ENCODE measurements at regions of chr1 and their contacts with region 1.

Region 1: DNA sequence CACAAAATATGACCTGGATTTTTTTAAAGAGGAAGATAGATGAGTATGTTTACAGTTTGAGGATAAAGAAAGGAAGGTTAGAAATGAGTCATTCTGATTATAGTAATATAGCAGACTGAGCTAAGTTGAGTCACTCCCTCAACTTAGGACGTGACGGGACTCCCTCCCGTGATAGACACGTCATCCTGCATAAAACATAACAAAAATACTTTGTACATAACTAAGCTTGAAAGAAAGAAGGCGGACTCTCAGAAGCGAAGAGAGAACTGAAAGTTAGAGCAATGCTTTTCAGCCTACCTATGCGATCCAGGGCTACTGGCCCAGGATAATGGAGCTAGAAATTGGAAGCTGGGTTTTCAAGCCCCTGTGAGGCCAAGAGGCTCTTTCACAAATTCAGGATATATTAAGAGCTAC is 53.0 kb upstream of the DESI2 start:
- DNase-seq: peak; percentile 76 to 87 (median 80)
- H3K4me3 ChIP-seq: no peak overlapping the region
- H3K4me3 Mint-ChIP-seq: no peak overlapping the region
- H3K27ac ChIP-seq: peak overlapping the region in 1 of 2 donors; percentile 52
- H3K27ac Mint-ChIP-seq: peak overlapping the region; percentile 58 to 94 (median 86)
- H3K4me1 ChIP-seq: peaks cover 8 to 13% of the 10 kb centered on the region in 2 donors
- H3K4me1 Mint-ChIP-seq: peaks cover 23% of the 10 kb centered on the region
- H3K27me3 ChIP-seq: no peaks in the 10 kb centered on the region
- H3K27me3 Mint-ChIP-seq: peaks cover 2 to 5% (median 3%) of the 10 kb centered on the region in 3 donors
- CTCF ChIP-seq: no peak

Region 2: DNA sequence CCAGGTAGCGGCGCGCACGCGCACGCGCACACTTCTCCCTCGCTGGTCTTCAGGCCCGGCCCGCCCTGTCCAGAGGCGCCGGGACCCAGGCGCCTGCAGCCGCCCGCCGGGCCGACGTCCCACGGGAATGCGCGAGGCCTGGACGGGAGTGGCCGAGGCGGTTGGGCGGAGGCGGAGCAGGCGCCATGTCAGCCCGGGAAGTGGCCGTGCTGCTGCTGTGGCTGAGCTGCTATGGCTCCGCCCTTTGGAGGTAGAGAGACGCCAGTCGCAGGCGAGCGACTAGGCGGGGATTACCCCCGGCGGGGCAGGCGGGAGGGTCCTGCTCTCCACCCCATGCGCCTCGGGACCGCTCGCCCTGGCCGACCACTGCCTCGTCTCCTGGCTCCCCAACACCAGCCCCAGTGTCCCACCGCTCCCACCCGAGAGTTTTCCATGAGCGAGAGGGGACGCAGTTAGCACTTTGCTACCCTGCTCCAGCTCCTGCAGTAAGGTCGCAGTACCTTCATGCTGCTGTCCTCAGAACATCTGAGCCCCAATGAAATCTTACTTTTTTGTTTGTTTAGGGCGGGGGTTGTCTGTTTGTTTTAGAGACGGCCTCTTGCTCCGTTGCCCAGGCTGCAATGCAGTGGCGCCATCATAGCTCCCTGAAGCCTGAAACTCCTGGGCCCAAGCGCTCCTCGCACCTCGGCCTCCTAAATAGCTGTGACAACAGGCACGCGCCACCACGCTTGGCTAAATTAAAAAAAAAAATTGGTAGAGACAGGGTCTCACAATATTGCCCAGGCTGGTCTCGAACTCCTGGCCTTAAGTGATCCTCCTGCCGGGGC is 138.5 kb before region 1 on chr1 and contains the start of gene CATSPERE:
- intact Hi-C with region 1: loop called in 1 of 2 experiments (anchors 10 kb)
- DNase-seq: peak; percentile 56 to 72 (median 68)
- H3K4me3 ChIP-seq: peak within 1 kb of the TSS; percentile 46 to 83 (median 64)
- H3K4me3 Mint-ChIP-seq: peak within 1 kb of the TSS; percentile 86 to 98
- H3K27ac ChIP-seq: peak within 1 kb of the TSS; percentile 21 to 75
- H3K27ac Mint-ChIP-seq: peak within 1 kb of the TSS; percentile 86 to 96 (median 92)
- H3K4me1 ChIP-seq: peaks cover 11 to 16% of the 10 kb centered on the region in 2 donors
- H3K4me1 Mint-ChIP-seq: peaks cover 9% of the 10 kb centered on the region
- H3K27me3 ChIP-seq: no peaks in the 10 kb centered on the region
- H3K27me3 Mint-ChIP-seq: peaks cover 0 to 2% (median 0%) of the 10 kb centered on the region in 3 donors
- CTCF ChIP-seq: no peak
- polyA plus RNA-seq, gene CATSPERE: 0.63 TPM in 1 of 3 donors, not detected in the others

Region 3: DNA sequence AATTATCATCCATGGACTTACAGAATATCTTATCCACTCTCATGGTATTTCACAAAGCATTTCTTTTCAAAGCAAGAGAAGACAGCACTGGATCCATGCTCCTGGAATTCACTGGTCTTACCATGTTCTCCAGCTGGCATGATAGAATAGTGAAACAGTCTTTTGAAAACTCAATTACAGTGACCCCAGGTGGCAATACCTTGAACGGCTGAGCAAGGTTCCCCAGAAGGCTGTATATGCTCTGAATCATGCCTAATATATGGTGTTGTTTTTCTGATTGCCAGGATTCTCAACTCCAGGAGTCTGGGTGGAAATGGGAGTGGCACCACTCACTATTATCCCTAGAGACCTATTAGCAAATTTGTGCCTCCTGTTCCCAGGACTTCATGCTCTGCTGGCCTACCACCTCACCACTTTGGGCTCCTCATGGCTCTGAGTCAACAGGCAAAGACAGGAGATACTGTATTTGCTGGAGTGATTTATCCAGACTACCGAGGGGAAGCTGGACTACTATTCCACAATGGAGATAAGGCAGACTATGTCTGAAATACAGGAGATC is 51.3 kb before region 1 on chr1:
- intact Hi-C with region 1: no loop called
- DNase-seq: no peak
- H3K4me3 ChIP-seq: no peak overlapping the region
- H3K4me3 Mint-ChIP-seq: no peak overlapping the region
- H3K27ac ChIP-seq: no peak overlapping the region
- H3K27ac Mint-ChIP-seq: no peak overlapping the region
- H3K4me1 ChIP-seq: no peaks in the 10 kb centered on the region
- H3K4me1 Mint-ChIP-seq: no peaks in the 10 kb centered on the region
- H3K27me3 ChIP-seq: no peaks in the 10 kb centered on the region
- H3K27me3 Mint-ChIP-seq: no peaks in the 10 kb centered on the region
- CTCF ChIP-seq: no peak

Region 4: GRCh38 chr1:244796718-244797406 is 196.9 kb after region 1 on chr1:
- intact Hi-C with region 1: loop called (anchors 5 kb)
- DNase-seq: peak; percentile 41 to 68 (median 64)
- H3K4me3 ChIP-seq: no peak overlapping the region
- H3K4me3 Mint-ChIP-seq: no peak overlapping the region
- H3K27ac ChIP-seq: no peak overlapping the region
- H3K27ac Mint-ChIP-seq: no peak overlapping the region
- H3K4me1 ChIP-seq: peaks cover 0 to 4% of the 10 kb centered on the region in 2 donors
- H3K4me1 Mint-ChIP-seq: peaks cover 2% of the 10 kb centered on the region
- H3K27me3 ChIP-seq: no peaks in the 10 kb centered on the region
- H3K27me3 Mint-ChIP-seq: peaks cover 5 to 7% (median 6%) of the 10 kb centered on the region in 3 donors
- CTCF ChIP-seq: peak; percentile 97

Region 5: GRCh38 chr1:245045087-245045881 is 445.3 kb after region 1 on chr1:
- intact Hi-C with region 1: loop called (anchors 2 to 10 kb)
- DNase-seq: no peak
- H3K4me3 ChIP-seq: no peak overlapping the region
- H3K4me3 Mint-ChIP-seq: no peak overlapping the region
- H3K27ac ChIP-seq: no peak overlapping the region
- H3K27ac Mint-ChIP-seq: peak overlapping the region in 1 of 7 donors; percentile 72
- H3K4me1 ChIP-seq: no peaks in the 10 kb centered on the region
- H3K4me1 Mint-ChIP-seq: peaks cover 18% of the 10 kb centered on the region
- H3K27me3 ChIP-seq: no peaks in the 10 kb centered on the region
- H3K27me3 Mint-ChIP-seq: peaks cover 0 to 1% (median 0%) of the 10 kb centered on the region in 3 donors
- CTCF ChIP-seq: no peak

Measured in CD14-positive monocyte (primary cell).